Naive thymus-derived CD4-positive, alpha-beta T cell (primary cell): ENCODE measurements at regions of chr19 and their contacts with region 1.

Region 1: DNA sequence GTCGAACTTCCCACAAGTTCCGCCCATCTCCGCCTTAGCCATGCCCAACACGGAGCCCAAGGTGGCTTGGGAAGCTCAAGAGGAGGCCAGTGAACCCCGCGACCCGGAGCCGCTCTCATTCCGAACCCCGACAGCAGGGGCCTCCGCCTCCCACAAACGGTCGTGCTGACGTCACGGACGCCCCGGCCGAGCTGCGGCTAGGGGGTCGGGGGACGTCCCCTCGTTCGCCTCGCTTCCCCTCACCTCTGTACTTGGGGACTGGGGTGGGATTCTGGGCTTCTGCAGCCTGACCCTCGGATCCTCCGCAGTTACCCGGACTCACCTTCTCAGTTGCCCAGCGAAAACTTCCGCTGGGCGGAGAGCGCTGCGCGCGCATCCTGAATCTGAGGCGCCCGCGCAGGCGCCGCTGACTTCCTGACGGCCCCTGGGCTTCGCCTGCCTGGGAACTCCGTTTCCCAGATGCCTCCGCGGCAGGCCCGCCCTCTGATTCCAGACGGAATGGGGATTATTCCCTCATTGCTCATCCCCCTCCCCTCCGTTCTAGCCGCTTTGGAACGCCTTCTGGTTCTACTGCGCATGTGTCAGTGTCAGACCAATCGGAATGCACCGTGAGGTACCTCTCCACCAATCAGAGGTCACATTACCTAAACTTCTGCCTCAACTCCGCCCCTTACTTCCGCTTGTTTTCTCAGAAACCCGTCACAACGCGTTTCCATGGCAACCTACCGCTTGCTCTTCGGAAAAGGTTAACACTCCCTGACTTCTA is at the start of gene VRK3:
- DNase-seq: peak; percentile 93 to 100 (median 99)
- ATAC-seq: peak; percentile 91
- H3K4me3 ChIP-seq: peak within 1 kb of the TSS; percentile 85
- H3K4me3 Mint-ChIP-seq: peak within 1 kb of the TSS; percentile 93 to 99 (median 94)
- H3K27ac ChIP-seq: peak within 1 kb of the TSS; percentile 96
- H3K27ac Mint-ChIP-seq: peak within 1 kb of the TSS; percentile 98 to 100 (median 99)
- H3K4me1 ChIP-seq: peaks cover 19 to 29% of the 10 kb centered on the region in 2 donors
- H3K4me1 Mint-ChIP-seq: peaks cover 30 to 73% (median 58%) of the 10 kb centered on the region in 7 donors
- H3K27me3 ChIP-seq: no peaks in the 10 kb centered on the region
- H3K27me3 Mint-ChIP-seq: peaks cover 0 to 6% (median 0%) of the 10 kb centered on the region in 5 donors
- total RNA-seq, gene VRK3: 70.6 to 121 (median 84.7) TPM

Region 2: DNA sequence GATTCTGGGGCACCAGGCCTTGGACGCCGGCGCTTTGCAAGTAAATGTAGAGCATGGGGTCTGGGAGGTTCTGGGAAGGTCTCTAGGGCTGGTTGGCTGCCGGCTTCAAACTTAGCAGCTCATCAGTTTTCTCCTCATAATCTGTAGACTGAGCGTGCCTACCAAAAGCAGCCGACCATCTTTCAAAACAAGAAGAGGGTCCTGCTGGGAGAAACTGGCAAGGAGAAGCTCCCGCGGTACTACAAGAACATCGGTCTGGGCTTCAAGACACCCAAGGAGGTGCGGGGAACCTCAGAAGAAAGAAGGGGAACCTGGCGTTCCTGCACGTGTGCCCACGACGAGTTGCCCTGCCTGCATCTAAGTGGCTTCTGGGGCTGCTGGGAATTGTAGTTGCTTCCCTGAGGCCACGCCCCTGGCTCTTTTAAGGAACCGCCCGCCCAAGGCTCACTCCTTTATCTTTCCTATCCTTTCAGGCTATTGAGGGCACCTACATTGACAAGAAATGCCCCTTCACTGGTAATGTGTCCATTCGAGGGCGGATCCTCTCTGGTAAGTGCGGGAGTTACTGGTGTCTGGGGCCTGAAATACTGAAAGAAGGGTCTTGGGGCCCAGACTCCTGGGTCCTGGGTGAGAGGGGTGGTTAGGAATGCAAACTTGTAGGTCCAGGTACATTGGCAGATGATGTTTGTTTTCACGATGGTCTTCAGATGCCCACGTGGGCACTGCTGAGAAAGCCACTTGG is 528.0 kb before region 1 on chr19:
- CTCF ChIA-PET with region 1: no interaction called
- POLR2A ChIA-PET with region 1: no interaction called
- intact Hi-C with region 1: loop called in 1 of 2 experiments (anchors 5 kb)
- DNase-seq: peak; percentile 55 to 85 (median 77)
- ATAC-seq: peak; percentile 20
- H3K4me3 ChIP-seq: peak overlapping the region; percentile 97
- H3K4me3 Mint-ChIP-seq: peak overlapping the region; percentile 96 to 100 (median 99)
- H3K27ac ChIP-seq: peak overlapping the region; percentile 99
- H3K27ac Mint-ChIP-seq: peak overlapping the region; percentile 91 to 100 (median 98)
- H3K4me1 ChIP-seq: peaks cover 21 to 40% of the 10 kb centered on the region in 2 donors
- H3K4me1 Mint-ChIP-seq: peaks cover 32 to 64% (median 50%) of the 10 kb centered on the region in 7 donors
- H3K27me3 ChIP-seq: no peaks in the 10 kb centered on the region
- H3K27me3 Mint-ChIP-seq: peaks cover 0 to 12% (median 0%) of the 10 kb centered on the region in 5 donors

Region 3: DNA sequence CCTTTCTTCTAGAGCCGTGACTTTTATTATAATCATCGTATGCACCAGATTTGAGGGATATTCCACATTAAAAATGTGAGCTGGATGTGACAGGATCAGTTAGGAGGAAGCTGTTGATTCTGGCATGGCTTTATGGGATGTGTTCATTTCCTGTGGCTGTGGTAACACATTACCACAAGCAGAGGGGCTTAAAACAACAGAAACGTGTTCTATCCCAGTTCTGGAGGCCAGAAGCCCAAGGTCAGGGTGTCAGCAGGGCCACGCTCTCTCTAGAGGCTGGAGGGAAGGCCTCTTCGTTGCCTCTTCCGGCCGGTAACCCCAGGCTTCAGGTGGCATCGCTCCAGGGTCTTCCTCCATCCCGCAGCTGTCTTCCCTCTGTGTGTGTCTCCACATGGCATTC is 192.7 kb before region 1 on chr19:
- CTCF ChIA-PET with region 1: no interaction called
- POLR2A ChIA-PET with region 1: no interaction called
- intact Hi-C with region 1: no loop called
- DNase-seq: no peak
- ATAC-seq: no peak
- H3K4me3 ChIP-seq: no peak overlapping the region
- H3K4me3 Mint-ChIP-seq: peak overlapping the region in 1 of 10 donors; percentile 23
- H3K27ac ChIP-seq: no peak overlapping the region
- H3K27ac Mint-ChIP-seq: peak overlapping the region in 1 of 9 donors; percentile 43
- H3K4me1 ChIP-seq: no peaks in the 10 kb centered on the region
- H3K4me1 Mint-ChIP-seq: peaks cover 0 to 10% (median 0%) of the 10 kb centered on the region in 7 donors
- H3K27me3 ChIP-seq: no peaks in the 10 kb centered on the region
- H3K27me3 Mint-ChIP-seq: no peaks in the 10 kb centered on the region

Region 4: GRCh38 chr19:49869441-49870176 is 155.6 kb before region 1 on chr19:
- CTCF ChIA-PET with region 1: no interaction called
- POLR2A ChIA-PET with region 1: no interaction called
- intact Hi-C with region 1: loop called (anchors 2 kb)
- DNase-seq: peak; percentile 83 to 94 (median 87)
- ATAC-seq: peak; percentile 87
- H3K4me3 ChIP-seq: peak overlapping the region; percentile 58
- H3K4me3 Mint-ChIP-seq: peak overlapping the region in 2 of 10 donors; percentile 87
- H3K27ac ChIP-seq: peak overlapping the region; percentile 72
- H3K27ac Mint-ChIP-seq: peak overlapping the region in 5 of 9 donors; percentile 59 to 87 (median 74)
- H3K4me1 ChIP-seq: peaks cover 31 to 38% of the 10 kb centered on the region in 2 donors
- H3K4me1 Mint-ChIP-seq: peaks cover 25 to 51% (median 45%) of the 10 kb centered on the region in 7 donors
- H3K27me3 ChIP-seq: no peaks in the 10 kb centered on the region
- H3K27me3 Mint-ChIP-seq: no peaks in the 10 kb centered on the region

Region 5: DNA sequence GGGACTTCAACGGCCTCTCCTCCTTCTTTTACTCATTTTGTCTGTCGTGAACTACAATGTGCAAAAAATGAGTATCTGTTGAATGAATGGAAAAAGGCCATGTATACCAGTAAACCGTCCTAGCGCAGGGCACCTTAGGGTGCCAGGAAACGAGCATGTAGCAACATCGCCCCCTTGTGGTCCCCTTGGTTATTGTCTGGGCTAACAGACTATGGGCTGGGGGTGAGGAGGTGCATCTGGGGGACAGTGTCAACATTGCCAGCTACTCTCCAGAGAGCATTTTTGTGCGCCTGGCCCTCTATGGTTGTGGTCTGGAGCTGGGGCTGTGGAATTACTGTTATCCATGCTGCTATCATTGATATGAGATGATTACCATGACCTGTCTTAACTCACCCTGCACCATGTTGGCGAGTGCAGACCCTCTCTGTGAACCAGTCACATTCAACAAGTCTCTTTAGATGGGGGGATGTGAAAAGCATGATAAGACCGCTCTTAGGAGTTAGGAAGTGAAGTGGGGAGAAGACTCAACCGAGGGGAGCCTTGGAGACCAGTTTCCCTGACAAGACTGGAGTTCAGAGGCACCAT is 41.5 kb before region 1 on chr19:
- CTCF ChIA-PET with region 1: no interaction called
- POLR2A ChIA-PET with region 1: no interaction called
- intact Hi-C with region 1: loop called (anchors 1 to 2 kb)
- DNase-seq: peak; percentile 49 to 79 (median 67)
- ATAC-seq: peak; percentile 73
- H3K4me3 ChIP-seq: no peak overlapping the region
- H3K4me3 Mint-ChIP-seq: no peak overlapping the region
- H3K27ac ChIP-seq: no peak overlapping the region
- H3K27ac Mint-ChIP-seq: no peak overlapping the region
- H3K4me1 ChIP-seq: no peaks in the 10 kb centered on the region
- H3K4me1 Mint-ChIP-seq: peaks cover 0 to 7% (median 0%) of the 10 kb centered on the region in 7 donors
- H3K27me3 ChIP-seq: no peaks in the 10 kb centered on the region
- H3K27me3 Mint-ChIP-seq: no peaks in the 10 kb centered on the region

Region 6: GRCh38 chr19:50383852-50384684 is 358.9 kb after region 1 on chr19 and contains the start of gene POLD1:
- CTCF ChIA-PET with region 1: no interaction called
- POLR2A ChIA-PET with region 1: no interaction called
- intact Hi-C with region 1: loop called in 1 of 2 experiments (anchors 1 kb)
- DNase-seq: peak; percentile 98 to 100 (median 99)
- ATAC-seq: peak; percentile 96
- H3K4me3 ChIP-seq: peak within 1 kb of the TSS; percentile 74
- H3K4me3 Mint-ChIP-seq: peak within 1 kb of the TSS; percentile 91 to 99 (median 94)
- H3K27ac ChIP-seq: peak within 1 kb of the TSS; percentile 75
- H3K27ac Mint-ChIP-seq: peak within 1 kb of the TSS; percentile 80 to 97 (median 94)
- H3K4me1 ChIP-seq: peaks cover 3 to 7% of the 10 kb centered on the region in 2 donors
- H3K4me1 Mint-ChIP-seq: peaks cover 16 to 51% (median 35%) of the 10 kb centered on the region in 7 donors
- H3K27me3 ChIP-seq: no peaks in the 10 kb centered on the region
- H3K27me3 Mint-ChIP-seq: no peaks in the 10 kb centered on the region
- total RNA-seq, gene POLD1: 26.0 to 110 (median 40.8) TPM

Region 7: DNA sequence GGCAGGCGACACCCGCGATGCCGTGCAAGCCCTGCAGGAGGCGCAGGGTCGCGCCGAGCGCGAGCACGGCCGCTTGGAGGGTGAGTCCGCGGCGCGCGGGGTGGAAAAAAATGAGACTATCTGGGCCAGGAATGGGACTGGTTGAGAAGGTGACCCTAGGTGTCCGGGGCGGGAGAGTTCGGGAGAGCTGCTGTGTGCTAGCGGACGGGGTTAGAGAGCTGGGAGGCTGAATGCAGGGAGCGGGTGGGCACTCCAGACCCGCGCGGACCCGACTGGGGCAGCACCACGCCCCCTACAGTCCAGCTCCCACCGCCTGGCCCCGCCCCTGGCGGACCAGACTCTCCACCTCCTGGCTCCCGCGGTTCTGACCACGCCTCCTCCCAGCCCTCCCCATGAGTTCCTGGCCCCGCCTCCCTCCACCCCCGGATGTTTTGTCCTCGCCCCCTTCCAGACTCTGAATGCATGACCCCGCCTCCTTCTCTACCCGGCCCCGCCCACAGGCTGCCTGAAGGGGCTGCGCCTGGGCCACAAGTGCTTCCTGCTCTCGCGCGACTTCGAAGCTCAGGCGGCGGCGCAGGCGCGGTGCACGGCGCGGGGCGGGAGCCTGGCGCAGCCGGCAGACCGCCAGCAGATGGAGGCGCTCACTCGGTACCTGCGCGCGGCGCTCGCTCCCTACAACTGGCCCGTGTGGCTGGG is 699.5 kb after region 1 on chr19:
- CTCF ChIA-PET with region 1: no interaction called
- POLR2A ChIA-PET with region 1: no interaction called
- intact Hi-C with region 1: loop called in 1 of 2 experiments (anchors 10 kb)
- DNase-seq: peak; percentile 74 to 99 (median 94)
- ATAC-seq: peak; percentile 93
- H3K4me3 ChIP-seq: peak overlapping the region; percentile 62
- H3K4me3 Mint-ChIP-seq: peak overlapping the region; percentile 79 to 92 (median 84)
- H3K27ac ChIP-seq: peak overlapping the region; percentile 66
- H3K27ac Mint-ChIP-seq: peak overlapping the region in 8 of 9 donors; percentile 34 to 87 (median 70)
- H3K4me1 ChIP-seq: peaks cover 5 to 12% of the 10 kb centered on the region in 2 donors
- H3K4me1 Mint-ChIP-seq: peaks cover 0 to 34% (median 24%) of the 10 kb centered on the region in 7 donors
- H3K27me3 ChIP-seq: peaks cover 5 to 12% of the 10 kb centered on the region in 2 donors
- H3K27me3 Mint-ChIP-seq: peaks cover 47 to 70% (median 53%) of the 10 kb centered on the region in 5 donors